ENCODE measurements at regions of chr9 and their contacts with region 1.

Region 1: DNA sequence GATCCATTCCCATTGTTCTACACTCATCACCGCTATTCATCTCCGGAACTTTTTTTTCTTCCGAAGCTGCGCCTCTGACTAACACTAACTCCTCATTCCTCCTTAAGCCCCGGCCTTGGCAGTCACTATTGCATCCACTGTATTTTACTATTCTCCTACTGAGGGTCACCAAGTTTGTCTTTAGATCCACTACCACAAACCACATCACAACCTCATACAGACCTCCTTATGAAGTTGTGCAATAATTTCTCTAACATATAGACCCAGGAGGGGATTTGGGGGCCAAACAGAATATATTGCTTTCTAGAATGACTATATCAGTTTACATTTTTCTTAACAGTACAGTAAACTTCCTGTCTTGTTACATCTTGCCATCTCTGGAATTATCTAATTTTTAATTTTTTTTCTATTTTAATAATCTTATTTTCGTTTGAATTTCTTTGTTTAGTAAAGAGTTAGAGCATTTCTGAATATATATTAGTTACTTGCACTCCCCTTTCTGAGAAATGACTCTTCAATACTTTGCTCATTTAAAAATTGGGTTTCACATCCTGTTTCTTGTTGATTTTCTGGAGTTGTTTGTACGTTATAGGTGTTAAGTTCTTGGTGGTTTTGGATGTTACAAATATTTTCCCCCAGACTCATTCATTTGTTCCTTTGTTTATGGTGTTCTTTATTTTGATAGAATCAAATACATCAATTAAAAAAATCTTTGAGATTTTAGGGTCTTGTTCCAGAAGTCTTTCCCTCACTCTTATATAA is 37.1 kb downstream of the DMRT2 start:
- DNase-seq: no peak
- ATAC-seq: no peak

Region 2: DNA sequence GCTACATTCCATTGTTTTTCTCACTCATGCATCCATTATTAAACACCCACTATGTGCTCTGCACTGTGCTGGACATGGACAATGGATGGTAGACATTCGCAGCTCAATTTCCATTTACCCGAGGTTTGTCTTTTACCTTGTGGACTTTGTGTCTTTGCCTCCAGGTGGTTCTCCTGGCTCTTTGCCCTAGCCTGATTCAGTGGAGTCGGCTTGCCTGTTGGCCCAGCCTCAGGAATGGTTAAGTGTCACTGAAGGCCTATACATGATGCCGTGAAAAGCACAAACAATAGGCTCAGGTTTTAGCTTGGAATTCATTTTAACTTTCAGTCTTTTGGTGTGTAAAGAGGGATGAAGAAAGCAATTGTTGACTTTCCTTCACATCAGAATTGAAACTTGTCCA is 127.4 kb before region 1 on chr9:
- intact Hi-C with region 1: no loop called
- DNase-seq: no peak
- ATAC-seq: no peak

Region 3: DNA sequence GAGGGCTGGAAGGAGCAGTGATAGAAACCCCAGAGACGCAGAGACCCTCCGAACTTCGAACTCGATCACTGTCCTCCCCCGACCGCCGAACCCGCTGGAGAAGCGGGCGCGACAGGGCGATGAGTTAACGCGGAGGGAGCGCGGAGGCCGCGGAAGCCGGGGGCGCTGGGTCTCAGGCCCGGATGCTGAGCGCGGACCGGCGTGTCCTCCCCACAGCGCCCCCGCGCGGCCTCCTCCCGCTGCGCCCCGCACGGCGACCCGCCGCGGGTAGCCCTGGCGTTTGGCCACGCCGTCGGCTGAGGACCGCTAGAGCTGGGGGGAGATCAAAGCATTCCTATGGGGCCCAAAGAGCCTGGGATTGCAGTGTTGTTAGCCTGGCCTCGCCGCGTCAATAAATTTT is 44.8 kb before region 1 on chr9:
- intact Hi-C with region 1: no loop called
- DNase-seq: no peak
- ATAC-seq: no peak

Region 4: DNA sequence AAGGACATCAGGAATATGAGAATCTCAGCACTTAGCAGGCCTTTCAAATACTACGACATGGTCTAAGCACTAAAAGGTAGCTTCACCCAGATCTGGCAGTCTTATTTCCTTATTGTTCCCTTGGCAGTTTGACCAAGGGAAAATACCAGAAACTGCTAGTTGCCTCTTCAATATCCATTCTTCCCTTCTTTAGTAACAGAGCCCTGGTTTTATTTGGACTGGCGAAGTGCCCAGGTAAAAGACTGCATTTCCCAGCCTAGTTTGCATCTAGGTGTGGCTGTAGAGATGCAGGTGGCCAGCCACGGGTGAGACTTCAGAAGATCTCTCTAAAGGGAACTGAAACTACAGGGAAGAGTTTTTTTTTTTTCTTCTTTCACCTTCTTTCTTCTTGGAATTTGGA is 15.6 kb before region 1 on chr9:
- intact Hi-C with region 1: loop called (anchors 2 kb)
- DNase-seq: no peak
- ATAC-seq: no peak

Region 5: DNA sequence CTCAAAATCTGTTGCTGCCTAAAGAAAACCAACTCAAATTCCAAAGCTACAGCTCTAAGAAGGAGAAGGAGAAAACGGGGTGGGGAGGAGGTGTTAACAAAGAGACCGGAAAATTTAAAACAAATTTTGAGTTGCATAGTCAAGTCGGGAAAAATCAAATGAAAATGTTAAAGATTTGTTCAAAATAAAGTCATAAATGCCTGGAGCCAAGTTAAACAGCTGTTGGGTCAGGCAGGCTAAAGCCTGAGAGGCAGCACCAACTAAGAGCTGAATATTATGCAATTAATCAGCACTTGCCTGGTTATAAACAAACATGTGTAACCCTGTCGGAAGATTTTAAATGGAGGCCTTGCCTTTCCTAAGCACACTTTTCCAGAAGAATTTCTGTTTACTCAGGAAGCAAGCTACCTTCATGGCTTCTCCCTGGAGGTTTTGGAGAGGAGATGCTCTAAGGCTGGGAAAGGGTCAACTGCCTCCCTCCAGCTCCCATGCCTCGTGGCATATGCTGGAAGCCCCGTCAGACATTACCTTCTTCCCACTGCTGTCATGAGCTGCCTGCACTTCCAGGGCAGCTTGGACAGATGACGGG is 233.4 kb after region 1 on chr9:
- intact Hi-C with region 1: no loop called
- DNase-seq: no peak
- ATAC-seq: peak; percentile 87

Measured in Right ventricle myocardium inferior (tissue), 1 donor.